ENCODE measurements at regions of chr4 and their contacts with region 1.

Region 1: DNA sequence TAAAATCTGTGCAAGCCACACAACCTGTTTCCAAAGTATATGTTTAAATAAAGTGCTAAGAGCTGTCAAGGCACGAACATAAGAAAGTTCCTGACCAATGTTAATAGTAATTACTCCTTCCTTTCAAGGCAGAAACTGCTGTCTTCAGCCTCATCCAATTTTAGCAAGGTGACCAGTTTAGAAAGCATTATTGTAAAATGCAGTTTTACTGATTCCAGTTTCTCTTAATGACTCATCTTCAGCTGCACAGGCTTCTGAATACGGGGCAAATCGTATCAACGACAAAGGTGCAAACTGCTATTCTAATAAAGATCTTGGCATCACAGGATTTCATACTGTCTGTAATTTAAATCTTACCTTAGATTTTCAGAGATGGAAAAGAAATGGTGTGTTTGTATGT is 87.5 kb downstream of the PPP3CA start:
- DNase-seq: no peak
- ATAC-seq: peak; percentile 40
- H3K4me3 Mint-ChIP-seq: peak overlapping the region; percentile 39
- H3K27ac Mint-ChIP-seq: peak overlapping the region; percentile 73
- H3K4me1 Mint-ChIP-seq: peaks cover 94% of the 10 kb centered on the region
- H3K27me3 Mint-ChIP-seq: no peaks in the 10 kb centered on the region
- CTCF ChIP-seq: no peak

Region 2: DNA sequence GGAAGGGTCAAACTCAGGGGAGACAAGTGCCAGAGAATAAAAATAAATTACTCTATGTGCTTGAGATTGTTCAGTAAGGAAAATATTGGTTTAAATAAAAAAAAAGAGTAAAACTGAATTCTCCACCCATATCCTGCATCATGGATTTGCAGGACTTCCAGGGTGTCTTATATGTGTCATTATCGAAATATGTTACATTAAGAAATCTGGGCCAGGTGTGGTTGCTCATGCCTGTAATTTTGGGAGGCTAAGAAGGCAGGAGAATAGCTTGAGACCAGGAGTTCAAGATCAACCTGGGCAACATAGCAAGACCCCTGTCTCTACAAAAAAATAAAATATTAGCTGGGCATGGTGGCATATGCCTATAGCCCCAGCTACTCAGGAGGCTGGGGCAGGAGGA is 17.4 kb before region 1 on chr4:
- CTCF ChIA-PET with region 1: no interaction called
- POLR2A ChIA-PET with region 1: no interaction called
- intact Hi-C with region 1: loop called (anchors 2 kb)
- DNase-seq: no peak
- ATAC-seq: no peak
- H3K4me3 Mint-ChIP-seq: no peak overlapping the region
- H3K27ac Mint-ChIP-seq: no peak overlapping the region
- H3K4me1 Mint-ChIP-seq: peaks cover 64% of the 10 kb centered on the region
- H3K27me3 Mint-ChIP-seq: no peaks in the 10 kb centered on the region
- CTCF ChIP-seq: no peak